CD8-positive, alpha-beta T cell (primary cell): ENCODE measurements at regions of chr1 and their contacts with region 1.

Region 1: GRCh38 chr1:182855911-182856310 is 16.8 kb downstream of the DHX9 start:
- DNase-seq: no peak
- ATAC-seq: no peak
- H3K4me3 ChIP-seq: no peak overlapping the region
- H3K4me3 Mint-ChIP-seq: no peak overlapping the region
- H3K27ac ChIP-seq: no peak overlapping the region
- H3K27ac Mint-ChIP-seq: no peak overlapping the region
- H3K4me1 ChIP-seq: no peaks in the 10 kb centered on the region
- H3K4me1 Mint-ChIP-seq: peaks cover 7% of the 10 kb centered on the region
- H3K27me3 ChIP-seq: no peaks in the 10 kb centered on the region
- H3K27me3 Mint-ChIP-seq: no peaks in the 10 kb centered on the region
- CTCF ChIP-seq: no peak

Region 2: DNA sequence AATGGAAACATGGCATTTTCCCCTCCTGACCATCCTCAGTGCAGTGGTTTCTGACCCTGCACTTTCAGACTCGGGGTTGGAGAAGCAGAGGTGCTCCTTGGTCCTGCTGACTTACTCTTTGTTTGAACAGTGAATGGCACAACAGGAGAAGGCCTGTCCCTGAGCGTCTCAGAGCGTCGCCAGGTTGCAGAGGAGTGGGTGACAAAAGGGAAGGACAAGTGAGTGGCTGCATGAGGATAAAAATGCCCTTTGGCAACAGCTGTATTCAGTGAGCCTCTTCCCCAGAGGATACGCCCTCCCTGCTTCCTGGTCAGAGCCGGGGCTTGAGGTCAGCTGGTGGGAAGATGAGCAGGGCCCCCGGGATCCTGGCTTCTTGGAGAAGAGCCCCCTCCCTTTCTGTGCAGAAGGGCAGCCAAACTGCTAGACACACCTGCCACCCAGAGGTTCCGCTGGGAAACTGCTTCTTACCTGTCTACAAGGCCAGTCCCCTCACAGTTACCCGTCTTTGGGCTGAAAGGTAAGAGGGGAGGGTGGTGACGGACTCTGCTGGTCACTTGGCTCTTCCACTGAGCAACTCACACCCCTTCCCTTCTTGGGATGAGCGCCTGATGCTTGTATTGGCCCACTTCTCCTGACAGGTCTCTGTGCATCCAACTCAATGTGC is 49.8 kb before region 1 on chr1:
- CTCF ChIA-PET with region 1: no interaction called
- POLR2A ChIA-PET with region 1: no interaction called
- intact Hi-C with region 1: no loop called
- DNase-seq: no peak
- ATAC-seq: no peak
- H3K4me3 ChIP-seq: no peak overlapping the region
- H3K4me3 Mint-ChIP-seq: no peak overlapping the region
- H3K27ac ChIP-seq: no peak overlapping the region
- H3K27ac Mint-ChIP-seq: no peak overlapping the region
- H3K4me1 ChIP-seq: no peaks in the 10 kb centered on the region
- H3K4me1 Mint-ChIP-seq: no peaks in the 10 kb centered on the region
- H3K27me3 ChIP-seq: no peaks in the 10 kb centered on the region
- H3K27me3 Mint-ChIP-seq: no peaks in the 10 kb centered on the region
- CTCF ChIP-seq: no peak

Region 3: GRCh38 chr1:182869241-182869666 is 13.3 kb after region 1 on chr1:
- CTCF ChIA-PET with region 1: no interaction called
- POLR2A ChIA-PET with region 1: no interaction called
- intact Hi-C with region 1: loop called in 1 of 2 experiments (anchors 2 kb)
- DNase-seq: peak in 3 of 9 experiments; percentile 13 to 20 (median 19)
- ATAC-seq: no peak
- H3K4me3 ChIP-seq: no peak overlapping the region
- H3K4me3 Mint-ChIP-seq: no peak overlapping the region
- H3K27ac ChIP-seq: no peak overlapping the region
- H3K27ac Mint-ChIP-seq: peak overlapping the region; percentile 13
- H3K4me1 ChIP-seq: no peaks in the 10 kb centered on the region
- H3K4me1 Mint-ChIP-seq: peaks cover 7% of the 10 kb centered on the region
- H3K27me3 ChIP-seq: no peaks in the 10 kb centered on the region
- H3K27me3 Mint-ChIP-seq: no peaks in the 10 kb centered on the region
- CTCF ChIP-seq: no peak